Sciatic nerve (tissue), 2 donors: ENCODE measurements at regions of chr9 and their contacts with region 1.

Region 1: GRCh38 chr9:12859704-12860251 is 85.0 kb downstream of the LURAP1L start:
- DNase-seq: no peak
- ATAC-seq: no peak

Region 2: GRCh38 chr9:13778631-13779030 is 918.9 kb after region 1 on chr9:
- intact Hi-C with region 1: loop called (anchors 10 kb)
- DNase-seq: no peak
- ATAC-seq: no peak

Region 3: DNA sequence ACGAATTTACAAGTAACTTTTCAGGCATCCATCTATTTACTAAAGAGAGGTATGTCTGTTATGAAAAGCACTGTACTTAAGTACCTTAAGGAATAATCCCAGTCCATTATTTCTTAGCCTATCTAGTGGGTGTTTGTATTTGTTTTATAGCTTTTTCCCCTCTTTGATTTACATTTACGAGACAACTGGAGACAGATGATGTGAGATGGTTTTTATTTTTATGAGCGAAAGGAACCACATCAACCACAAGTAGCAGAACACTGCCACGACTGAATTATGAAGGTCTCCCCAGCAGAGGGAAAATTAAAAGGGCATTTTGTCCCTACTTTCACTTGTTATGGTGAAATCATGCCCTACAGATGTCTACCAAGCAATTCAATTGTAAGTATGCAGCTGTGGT is 1096.3 kb after region 1 on chr9:
- intact Hi-C with region 1: no loop called
- DNase-seq: no peak
- ATAC-seq: no peak